Activated CD4-positive, alpha-beta T cell treated with anti-CD3 and anti-CD28 coated beads, Interleukin-2, amount 10 ng/mL, durations not matched to agents 24 days and 14 days (primary cell): ENCODE measurements at regions of chr1 and their contacts with region 1.

Region 1: GRCh38 chr1:9181176-9181906 is 52.4 kb upstream of the GPR157 start:
- DNase-seq: peak; percentile 94
- H3K4me3 Mint-ChIP-seq: peak overlapping the region; percentile 88
- H3K27ac Mint-ChIP-seq: peak overlapping the region; percentile 85
- H3K4me1 Mint-ChIP-seq: peaks cover 20% of the 10 kb centered on the region
- H3K27me3 Mint-ChIP-seq: peaks cover 13% of the 10 kb centered on the region

Region 2: GRCh38 chr1:9234223-9235095 is 53.1 kb after region 1 on chr1 and contains the start of gene H6PD:
- intact Hi-C with region 1: loop called (anchors 5 kb)
- DNase-seq: peak; percentile 96
- H3K4me3 Mint-ChIP-seq: peak within 1 kb of the TSS; percentile 90
- H3K27ac Mint-ChIP-seq: peak within 1 kb of the TSS; percentile 93
- H3K4me1 Mint-ChIP-seq: peaks cover 36% of the 10 kb centered on the region
- H3K27me3 Mint-ChIP-seq: no peaks in the 10 kb centered on the region
- total RNA-seq, gene H6PD: 17.4 and 17.7 TPM in 2 replicates